ENCODE measurements at regions of chr12 and their contacts with region 1.

Region 1: DNA sequence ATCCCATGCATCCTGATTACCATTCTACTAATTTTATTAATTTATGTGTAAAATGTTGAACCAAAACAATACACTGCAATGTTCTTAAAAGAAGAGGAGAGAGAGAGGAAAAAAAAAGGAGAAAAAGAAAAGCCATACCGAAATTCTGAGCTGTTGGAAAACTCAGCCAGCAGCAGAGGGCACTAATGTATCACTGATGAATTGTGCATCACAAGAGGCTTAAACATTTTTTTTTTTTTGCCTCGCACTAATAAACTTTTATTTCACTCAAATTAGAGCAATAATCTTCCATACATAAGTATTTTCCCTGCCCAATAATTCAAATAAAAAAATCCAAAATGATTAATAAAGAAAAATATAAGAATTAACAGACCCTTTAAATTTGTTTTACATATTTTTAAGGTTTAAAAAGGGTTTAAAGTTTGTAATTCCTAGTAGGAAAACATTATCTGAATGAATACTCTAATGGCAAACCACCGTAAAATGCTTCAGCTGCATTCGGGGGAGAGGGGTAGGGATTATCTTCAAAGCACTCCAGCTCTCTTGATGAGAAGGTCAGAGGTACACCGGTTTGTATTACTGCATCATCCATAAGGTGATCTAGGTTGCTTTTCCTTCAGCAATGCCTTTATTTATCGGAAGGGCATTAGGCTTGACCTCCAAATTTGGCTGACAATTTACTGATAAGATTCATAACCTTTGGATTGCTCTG is 41.9 kb downstream of the ATP23 start:
- DNase-seq: peak in 2 of 5 donors; percentile 13 to 27
- ATAC-seq: no peak
- H3K4me3 ChIP-seq: no peak overlapping the region
- H3K27ac ChIP-seq: no peak overlapping the region
- H3K4me1 ChIP-seq: peaks cover 0 to 9% (median 4%) of the 10 kb centered on the region in 12 donors
- H3K27me3 ChIP-seq: no peaks in the 10 kb centered on the region
- CTCF ChIP-seq: peak; percentile 45 to 81 (median 72)
- POLR2A ChIP-seq: no peak

Region 2: GRCh38 chr12:58105225-58106119 is 122.2 kb after region 1 on chr12:
- intact Hi-C with region 1: loop called in 1 of 10 experiments (anchors 10 kb)
- DNase-seq: no peak
- ATAC-seq: peak; percentile 59 to 69 (median 68)
- H3K4me3 ChIP-seq: no peak overlapping the region
- H3K27ac ChIP-seq: peak overlapping the region in 11 of 12 donors; percentile 11 to 90 (median 54)
- H3K4me1 ChIP-seq: peaks cover 0 to 18% (median 1%) of the 10 kb centered on the region in 12 donors
- H3K27me3 ChIP-seq: no peaks in the 10 kb centered on the region
- CTCF ChIP-seq: peak in 11 of 12 donors; percentile 14 to 55 (median 32)
- POLR2A ChIP-seq: no peak

Region 3: DNA sequence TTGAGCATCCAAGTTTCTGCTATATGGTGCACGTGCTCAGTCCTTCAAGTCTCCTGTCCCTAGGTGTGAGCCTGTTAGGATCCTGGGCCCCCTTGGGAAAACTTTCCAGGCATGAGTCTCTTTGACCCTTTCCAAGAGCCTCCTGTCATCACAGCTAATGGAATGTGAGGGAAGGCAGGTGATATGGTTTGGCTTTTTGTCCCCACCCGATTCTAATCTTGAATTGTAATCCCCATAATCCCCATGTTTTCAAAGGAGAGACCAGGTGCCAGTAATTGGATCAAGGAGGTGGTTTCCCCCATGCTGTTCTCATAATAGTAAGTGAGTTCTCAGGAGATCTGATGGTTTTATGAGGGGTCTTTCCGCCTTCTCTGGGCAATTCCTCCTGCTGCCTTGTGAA is 223.6 kb after region 1 on chr12:
- intact Hi-C with region 1: no loop called
- DNase-seq: no peak
- ATAC-seq: no peak
- H3K4me3 ChIP-seq: no peak overlapping the region
- H3K27ac ChIP-seq: no peak overlapping the region
- H3K4me1 ChIP-seq: peaks cover 0 to 26% (median 16%) of the 10 kb centered on the region in 12 donors
- H3K27me3 ChIP-seq: no peaks in the 10 kb centered on the region
- CTCF ChIP-seq: no peak
- POLR2A ChIP-seq: no peak

Region 4: GRCh38 chr12:58302485-58303011 is 319.2 kb after region 1 on chr12:
- intact Hi-C with region 1: loop called in 3 of 10 experiments (anchors 5 to 10 kb)
- DNase-seq: no peak
- ATAC-seq: no peak
- H3K4me3 ChIP-seq: no peak overlapping the region
- H3K27ac ChIP-seq: no peak overlapping the region
- H3K4me1 ChIP-seq: peaks cover 0 to 4% (median 0%) of the 10 kb centered on the region in 12 donors
- H3K27me3 ChIP-seq: no peaks in the 10 kb centered on the region
- CTCF ChIP-seq: peak in 7 of 12 donors; percentile 13 to 49 (median 28)
- POLR2A ChIP-seq: no peak

Region 5: DNA sequence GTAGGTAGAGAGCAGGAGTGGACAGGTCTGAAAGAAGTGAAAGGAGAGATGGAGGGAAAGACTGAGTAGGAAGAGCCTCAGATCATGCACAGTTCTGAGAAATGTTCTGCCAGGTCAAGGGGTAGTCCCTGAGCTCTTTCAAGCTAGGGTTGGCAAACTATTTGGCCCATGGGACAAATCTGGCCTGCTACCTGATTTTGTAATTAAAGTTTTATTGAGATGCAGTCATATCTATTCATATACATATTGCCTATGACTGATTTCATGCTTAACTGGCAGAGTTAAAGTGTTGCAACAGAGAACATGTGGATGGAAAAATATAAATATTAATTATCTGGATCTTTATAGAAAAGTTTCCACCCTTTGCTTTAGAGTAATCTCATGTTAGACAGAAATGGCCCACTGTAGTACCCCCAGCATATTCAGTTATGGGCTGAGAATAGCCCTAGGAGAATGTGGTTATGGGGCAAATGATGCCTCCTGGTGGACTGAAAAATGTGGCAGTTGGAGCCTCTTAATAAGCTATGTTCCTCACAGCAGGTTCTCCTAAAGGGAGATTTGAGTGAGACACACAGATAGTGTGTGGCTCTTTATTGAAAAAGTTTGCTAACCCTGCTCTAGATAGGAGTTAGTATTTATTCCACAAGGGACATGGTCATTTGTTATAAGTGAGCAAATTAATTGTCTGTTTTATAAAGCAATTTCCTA is 460.1 kb after region 1 on chr12:
- intact Hi-C with region 1: loop called in 6 of 10 experiments (anchors 5 to 10 kb)
- DNase-seq: no peak
- ATAC-seq: peak in 2 of 4 donors; percentile 16 to 33
- H3K4me3 ChIP-seq: no peak overlapping the region
- H3K27ac ChIP-seq: no peak overlapping the region
- H3K4me1 ChIP-seq: peaks cover 0 to 12% (median 0%) of the 10 kb centered on the region in 12 donors
- H3K27me3 ChIP-seq: no peaks in the 10 kb centered on the region
- CTCF ChIP-seq: peak in 11 of 12 donors; percentile 27 to 53 (median 42)
- POLR2A ChIP-seq: no peak

Region 6: GRCh38 chr12:58920102-58920960 is 937.0 kb after region 1 on chr12 and contains the start of gene LRIG3:
- intact Hi-C with region 1: loop called in 1 of 10 experiments (anchors 10 kb)
- DNase-seq: peak; percentile 89 to 94 (median 91)
- ATAC-seq: peak; percentile 91 to 96 (median 96)
- H3K4me3 ChIP-seq: peak within 1 kb of the TSS; percentile 67 to 93 (median 88)
- H3K27ac ChIP-seq: peak within 1 kb of the TSS; percentile 74 to 96 (median 93)
- H3K4me1 ChIP-seq: peaks cover 0 to 38% (median 16%) of the 10 kb centered on the region in 12 donors
- H3K27me3 ChIP-seq: no peaks in the 10 kb centered on the region
- CTCF ChIP-seq: peak in 4 of 12 donors; percentile 7 to 13 (median 10)
- POLR2A ChIP-seq: peak in 1 of 2 donors; percentile 25
- total RNA-seq, gene LRIG3: 3.7 to 8.9 (median 4.7) TPM

Region 7: GRCh38 chr12:59149997-59150642 is 1166.8 kb after region 1 on chr12:
- intact Hi-C with region 1: loop called in 9 of 10 experiments (anchors 2 to 10 kb)
- DNase-seq: peak in 1 of 5 donors; percentile 16
- ATAC-seq: peak in 3 of 4 donors; percentile 89 to 94 (median 90)
- H3K4me3 ChIP-seq: no peak overlapping the region
- H3K27ac ChIP-seq: no peak overlapping the region
- H3K4me1 ChIP-seq: no peaks in the 10 kb centered on the region
- H3K27me3 ChIP-seq: no peaks in the 10 kb centered on the region
- CTCF ChIP-seq: peak; percentile 83 to 98 (median 95)
- POLR2A ChIP-seq: no peak

Measured in heart left ventricle (tissue), 16 donors.